ENCODE measurements at regions of chr11 and their contacts with region 1.

Region 1: GRCh38 chr11:124837491-124837856 is 27.8 kb upstream of the ROBO3 start:
- DNase-seq: peak; percentile 74 to 76
- H3K4me3 ChIP-seq: no peak overlapping the region
- H3K4me3 Mint-ChIP-seq: peak overlapping the region; percentile 81
- H3K27ac Mint-ChIP-seq: no peak overlapping the region
- H3K4me1 ChIP-seq: peaks cover 13% of the 10 kb centered on the region; the same call in 1 of the 2 replicates
- H3K4me1 Mint-ChIP-seq: peaks cover 6% of the 10 kb centered on the region
- H3K27me3 ChIP-seq: peaks cover 16% of the 10 kb centered on the region
- H3K27me3 Mint-ChIP-seq: peaks cover 33% of the 10 kb centered on the region
- CTCF ChIP-seq: peak in 1 of 2 experiments; percentile 85

Region 2: GRCh38 chr11:124644426-124645280 is 192.8 kb before region 1 on chr11:
- CTCF ChIA-PET with region 1: interaction called, 6 read pairs
- POLR2A ChIA-PET with region 1: no interaction called
- intact Hi-C with region 1: loop called (anchors 1 kb)
- DNase-seq: peak; percentile 77 to 79
- H3K4me3 ChIP-seq: 0 out of 2 replicates have a peak overlapping the region, but pooled peaks have one; percentile 1
- H3K4me3 Mint-ChIP-seq: peak overlapping the region; percentile 54
- H3K27ac Mint-ChIP-seq: no peak overlapping the region
- H3K4me1 ChIP-seq: no peaks in the 10 kb centered on the region
- H3K4me1 Mint-ChIP-seq: no peaks in the 10 kb centered on the region
- H3K27me3 ChIP-seq: no peaks in the 10 kb centered on the region
- H3K27me3 Mint-ChIP-seq: no peaks in the 10 kb centered on the region
- CTCF ChIP-seq: peak; percentile 92 to 99

Region 3: DNA sequence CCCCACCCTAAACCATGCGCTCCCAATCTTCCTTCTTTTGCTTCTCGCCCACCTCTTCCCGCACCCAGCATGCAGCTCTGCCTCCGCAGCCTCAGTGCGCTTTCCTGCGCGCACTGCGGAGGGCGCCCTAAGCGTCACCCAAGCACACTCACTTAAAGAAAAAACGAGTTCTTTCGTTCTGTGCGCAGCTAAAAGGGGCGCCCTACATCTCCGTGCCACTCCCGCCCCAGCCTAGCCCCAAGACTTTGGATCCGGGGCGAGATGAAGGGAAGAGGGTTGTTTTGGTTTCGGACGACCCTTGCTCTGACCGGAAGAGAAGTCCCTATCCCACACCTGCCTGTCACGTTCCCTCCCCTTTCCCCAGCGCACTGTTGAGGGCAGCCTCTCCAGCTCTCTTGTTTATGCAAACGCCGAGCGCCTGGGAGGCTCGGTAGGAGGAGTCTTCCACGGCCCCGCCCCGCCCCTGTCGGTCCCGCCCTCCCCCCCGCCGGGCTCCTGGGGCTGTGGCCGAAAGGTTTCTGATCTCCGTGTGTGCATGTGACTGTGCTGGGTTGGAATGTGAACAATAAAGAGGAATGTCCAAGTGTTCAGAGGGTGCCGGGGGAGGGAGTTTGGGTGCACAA is 90.7 kb before region 1 on chr11:
- CTCF ChIA-PET with region 1: interaction called, 8 read pairs
- POLR2A ChIA-PET with region 1: interaction called, 6 read pairs
- intact Hi-C with region 1: loop called (anchors 1 kb)
- DNase-seq: peak; percentile 94 to 98
- H3K4me3 ChIP-seq: peak overlapping the region; percentile 57
- H3K4me3 Mint-ChIP-seq: peak overlapping the region; percentile 84
- H3K27ac Mint-ChIP-seq: peak overlapping the region; percentile 60
- H3K4me1 ChIP-seq: peaks cover 25% of the 10 kb centered on the region
- H3K4me1 Mint-ChIP-seq: peaks cover 17% of the 10 kb centered on the region
- H3K27me3 ChIP-seq: peaks cover under 1% of the 10 kb centered on the region; the same call in 1 of the 2 replicates
- H3K27me3 Mint-ChIP-seq: peaks cover 7% of the 10 kb centered on the region
- CTCF ChIP-seq: peak; percentile 75 to 94

Region 4: GRCh38 chr11:124793466-124794278 is 43.8 kb before region 1 on chr11:
- CTCF ChIA-PET with region 1: interaction called, 36 read pairs
- POLR2A ChIA-PET with region 1: interaction called, 8 read pairs
- intact Hi-C with region 1: loop called (anchors 1 kb)
- DNase-seq: peak in 1 of 2 experiments; percentile 79
- H3K4me3 ChIP-seq: no peak overlapping the region
- H3K4me3 Mint-ChIP-seq: no peak overlapping the region
- H3K27ac Mint-ChIP-seq: no peak overlapping the region
- H3K4me1 ChIP-seq: peaks cover 5% of the 10 kb centered on the region; the same call in 1 of the 2 replicates
- H3K4me1 Mint-ChIP-seq: peaks cover 24% of the 10 kb centered on the region
- H3K27me3 ChIP-seq: no peaks in the 10 kb centered on the region
- H3K27me3 Mint-ChIP-seq: no peaks in the 10 kb centered on the region
- CTCF ChIP-seq: peak; percentile 85 to 94

Region 5: GRCh38 chr11:124800226-124800929 is 37.1 kb before region 1 on chr11 and contains the start of gene MSANTD2:
- CTCF ChIA-PET with region 1: interaction called, 36 read pairs
- POLR2A ChIA-PET with region 1: interaction called, 8 read pairs
- intact Hi-C with region 1: loop called (anchors 1 kb)
- DNase-seq: peak; percentile 84 to 92
- H3K4me3 ChIP-seq: peak within 1 kb of the TSS; percentile 96
- H3K4me3 Mint-ChIP-seq: peak within 1 kb of the TSS; percentile 81
- H3K27ac Mint-ChIP-seq: peak within 1 kb of the TSS; percentile 65
- H3K4me1 ChIP-seq: peaks cover 17% of the 10 kb centered on the region
- H3K4me1 Mint-ChIP-seq: peaks cover 25% of the 10 kb centered on the region
- H3K27me3 ChIP-seq: no peaks in the 10 kb centered on the region
- H3K27me3 Mint-ChIP-seq: no peaks in the 10 kb centered on the region
- CTCF ChIP-seq: no peak
- total RNA-seq, gene MSANTD2: 28.3 and 33.2 TPM in 2 replicates

Region 6: GRCh38 chr11:124865921-124866583 is 28.6 kb after region 1 on chr11:
- CTCF ChIA-PET with region 1: interaction called, 22 read pairs
- POLR2A ChIA-PET with region 1: no interaction called
- intact Hi-C with region 1: loop called (anchors 1 kb)
- DNase-seq: peak; percentile 58 to 83
- H3K4me3 ChIP-seq: peak overlapping the region; percentile 19
- H3K4me3 Mint-ChIP-seq: peak overlapping the region; percentile 32
- H3K27ac Mint-ChIP-seq: no peak overlapping the region
- H3K4me1 ChIP-seq: peaks cover 22% of the 10 kb centered on the region
- H3K4me1 Mint-ChIP-seq: peaks cover 7% of the 10 kb centered on the region
- H3K27me3 ChIP-seq: peaks cover 16% of the 10 kb centered on the region
- H3K27me3 Mint-ChIP-seq: peaks cover 48% of the 10 kb centered on the region
- CTCF ChIP-seq: peak; percentile 91 to 98

Region 7: DNA sequence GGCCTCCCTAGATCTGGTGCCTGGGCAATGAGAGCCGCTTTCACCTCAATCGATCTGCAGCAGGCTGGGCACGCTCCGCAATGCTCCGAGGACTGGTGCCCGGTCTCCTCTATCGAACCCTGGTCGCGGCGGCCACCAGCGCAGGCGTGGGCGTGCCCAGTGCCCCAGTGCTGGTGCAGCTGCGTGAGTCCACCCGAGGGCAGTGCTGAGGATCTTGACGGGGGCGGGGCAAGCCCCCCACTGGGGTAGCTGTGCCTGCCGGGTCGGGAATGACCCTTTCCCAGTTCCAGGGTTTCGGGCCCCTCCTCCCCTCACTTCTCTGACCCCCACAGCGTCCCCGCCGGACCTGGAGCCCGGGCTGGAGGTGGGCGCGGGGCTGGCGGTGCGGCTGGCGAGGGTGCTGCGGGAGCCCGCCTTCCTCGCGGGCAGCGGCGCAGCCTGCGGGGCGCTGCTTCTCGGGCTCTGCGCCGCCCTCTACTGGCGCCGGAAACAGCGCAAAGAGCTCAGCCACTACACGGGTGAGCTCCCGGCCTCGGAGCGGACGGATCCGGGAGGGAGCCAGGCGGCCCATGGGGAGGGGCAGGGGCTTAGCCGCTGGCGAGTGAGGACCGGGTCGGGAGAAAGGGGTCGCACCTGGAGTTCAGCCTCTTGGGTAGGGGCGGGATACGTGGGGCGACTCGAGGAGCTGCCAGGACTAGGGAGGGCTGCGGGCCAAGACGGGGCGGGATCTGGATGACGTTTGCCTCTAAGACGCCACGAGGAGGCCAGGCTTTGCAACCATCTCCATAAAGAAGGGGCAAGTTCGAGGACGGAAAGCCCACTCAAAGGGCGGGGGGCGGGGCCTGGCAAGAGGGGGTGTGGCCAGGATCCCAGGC is 38.7 kb after region 1 on chr11:
- CTCF ChIA-PET with region 1: interaction called, 21 read pairs
- POLR2A ChIA-PET with region 1: interaction called, 3 read pairs
- intact Hi-C with region 1: no loop called
- DNase-seq: peak; percentile 86 to 93
- H3K4me3 ChIP-seq: peak overlapping the region; percentile 62
- H3K4me3 Mint-ChIP-seq: peak overlapping the region; percentile 80
- H3K27ac Mint-ChIP-seq: peak overlapping the region; percentile 83
- H3K4me1 ChIP-seq: 0 out of 2 replicates have a peak, but pooled peaks cover 4% of the 10 kb centered on the region
- H3K4me1 Mint-ChIP-seq: peaks cover 12% of the 10 kb centered on the region
- H3K27me3 ChIP-seq: peaks cover 4% of the 10 kb centered on the region
- H3K27me3 Mint-ChIP-seq: peaks cover 16% of the 10 kb centered on the region
- CTCF ChIP-seq: peak; percentile 92 to 97